PC-9 (cell line): ENCODE measurements at regions of chr10 and their contacts with region 1.

Region 1: DNA sequence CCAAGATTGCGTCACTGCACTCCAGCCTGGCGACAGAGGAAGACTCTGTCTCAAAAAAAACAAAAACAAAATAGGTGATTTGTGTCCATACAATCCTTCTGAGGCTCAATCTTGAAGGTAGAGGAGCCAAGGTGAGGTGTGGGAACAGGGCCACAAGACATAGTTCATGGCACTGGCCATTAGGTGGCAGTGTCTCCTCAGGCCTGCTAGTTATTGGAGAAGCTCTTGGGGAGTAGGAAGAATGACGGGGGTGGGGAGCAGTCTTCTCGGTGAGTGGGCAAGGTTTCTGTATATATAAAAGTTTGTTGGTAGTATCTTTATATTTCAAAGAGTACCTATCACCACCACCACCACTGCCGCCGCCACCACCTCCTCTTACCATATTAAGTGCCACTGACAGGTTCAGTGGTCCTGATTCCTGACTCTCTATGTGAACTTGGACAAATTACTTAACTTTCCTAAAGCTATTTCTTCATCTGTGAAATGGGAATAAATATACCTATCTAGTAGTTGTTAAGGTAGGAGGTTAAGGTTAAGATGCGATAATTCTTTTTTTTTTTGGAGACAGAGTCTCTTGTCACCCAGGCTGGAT is 24.0 kb downstream of the CCSER2 start:
- DNase-seq: peak; percentile 51 to 52
- H3K4me3 ChIP-seq: no peak overlapping the region
- H3K27ac ChIP-seq: no peak overlapping the region
- H3K4me1 ChIP-seq: peaks cover 10% of the 10 kb centered on the region
- H3K27me3 ChIP-seq: no peaks in the 10 kb centered on the region
- CTCF ChIP-seq: peak; percentile 77

Region 2: DNA sequence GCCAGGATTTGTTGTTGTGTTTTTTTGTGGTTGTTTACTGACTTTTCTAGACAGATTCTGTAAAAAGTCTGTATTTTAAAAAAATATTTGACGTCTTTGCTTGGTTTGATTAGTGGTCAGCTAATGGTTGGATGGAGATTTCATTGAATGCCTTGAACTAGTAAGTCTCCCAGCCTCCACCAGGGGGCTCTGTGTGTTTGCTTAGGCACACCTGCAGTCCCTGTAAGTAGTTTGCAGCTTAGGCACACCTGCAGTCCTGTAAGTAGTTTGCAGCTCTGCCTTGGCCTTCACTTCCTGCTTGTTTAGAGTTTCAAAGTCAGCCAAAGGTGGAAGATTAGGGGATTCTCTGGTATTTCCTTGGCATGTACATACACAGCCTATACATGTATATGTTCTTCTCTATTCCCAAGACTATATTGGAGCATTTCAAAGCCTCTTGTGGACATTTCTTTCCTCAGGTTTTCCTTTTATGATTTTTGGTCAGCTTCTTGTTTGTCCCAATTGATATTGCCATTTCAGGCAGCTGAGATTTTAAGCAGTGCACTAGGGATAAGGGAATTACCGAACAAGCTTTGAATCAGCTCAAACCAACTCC is 77.7 kb after region 1 on chr10:
- CTCF ChIA-PET with region 1: no interaction called
- POLR2A ChIA-PET with region 1: no interaction called
- intact Hi-C with region 1: no loop called
- DNase-seq: peak; percentile 67 to 74
- H3K4me3 ChIP-seq: no peak overlapping the region
- H3K27ac ChIP-seq: no peak overlapping the region
- H3K4me1 ChIP-seq: peaks cover 7% of the 10 kb centered on the region
- H3K27me3 ChIP-seq: no peaks in the 10 kb centered on the region
- CTCF ChIP-seq: peak; percentile 96

Region 3: DNA sequence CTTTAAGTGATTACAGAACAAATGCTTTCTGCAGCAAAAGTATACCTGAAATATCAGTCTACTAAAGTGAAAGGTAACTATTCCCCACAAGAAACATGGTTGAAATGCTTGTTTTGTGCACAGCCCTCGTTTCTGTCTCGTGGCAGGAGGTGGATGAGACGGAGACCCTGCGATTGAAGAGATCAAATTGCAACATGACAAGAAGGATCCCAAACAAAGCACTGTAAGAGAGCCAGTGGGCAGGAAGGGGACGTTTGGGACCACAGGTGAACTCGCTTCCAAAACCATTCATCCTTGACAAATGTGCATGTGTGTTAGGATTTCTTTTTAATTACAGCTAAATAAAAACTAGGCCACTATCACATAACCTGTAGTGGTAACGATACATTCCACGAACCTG is 168.7 kb after region 1 on chr10:
- CTCF ChIA-PET with region 1: no interaction called
- POLR2A ChIA-PET with region 1: no interaction called
- intact Hi-C with region 1: no loop called
- DNase-seq: no peak
- H3K4me3 ChIP-seq: no peak overlapping the region
- H3K27ac ChIP-seq: no peak overlapping the region
- H3K4me1 ChIP-seq: peaks cover 4% of the 10 kb centered on the region; the same call in 1 of the 2 replicates
- H3K27me3 ChIP-seq: no peaks in the 10 kb centered on the region
- CTCF ChIP-seq: no peak

Region 4: GRCh38 chr10:84574102-84574501 is 221.8 kb after region 1 on chr10:
- CTCF ChIA-PET with region 1: interaction called, 11 read pairs
- POLR2A ChIA-PET with region 1: no interaction called
- intact Hi-C with region 1: no loop called
- DNase-seq: no peak
- H3K4me3 ChIP-seq: no peak overlapping the region
- H3K27ac ChIP-seq: no peak overlapping the region
- H3K4me1 ChIP-seq: no peaks in the 10 kb centered on the region
- H3K27me3 ChIP-seq: peaks cover 31% of the 10 kb centered on the region
- CTCF ChIP-seq: peak; percentile 50; the same call in 1 of the 2 replicates